CD8-positive, alpha-beta T cell (primary cell): ENCODE measurements at regions of chr5 and their contacts with region 1.

Region 1: GRCh38 chr5:113059232-113060040 is 82.8 kb downstream of the DCP2 start:
- DNase-seq: peak in 1 of 9 experiments; percentile 42
- ATAC-seq: no peak
- H3K4me3 ChIP-seq: no peak overlapping the region
- H3K4me3 Mint-ChIP-seq: peak overlapping the region; percentile 33
- H3K27ac ChIP-seq: no peak overlapping the region
- H3K27ac Mint-ChIP-seq: peak overlapping the region; percentile 78
- H3K4me1 ChIP-seq: peaks cover 48% of the 10 kb centered on the region
- H3K4me1 Mint-ChIP-seq: peaks cover 70% of the 10 kb centered on the region
- H3K27me3 ChIP-seq: no peaks in the 10 kb centered on the region
- H3K27me3 Mint-ChIP-seq: no peaks in the 10 kb centered on the region
- CTCF ChIP-seq: no peak

Region 2: GRCh38 chr5:112186401-112186990 is 872.9 kb before region 1 on chr5:
- CTCF ChIA-PET with region 1: no interaction called
- POLR2A ChIA-PET with region 1: no interaction called
- intact Hi-C with region 1: no loop called
- DNase-seq: peak in 2 of 9 experiments; percentile 35 to 41
- ATAC-seq: no peak
- H3K4me3 ChIP-seq: no peak overlapping the region
- H3K4me3 Mint-ChIP-seq: no peak overlapping the region
- H3K27ac ChIP-seq: no peak overlapping the region
- H3K27ac Mint-ChIP-seq: no peak overlapping the region
- H3K4me1 ChIP-seq: no peaks in the 10 kb centered on the region
- H3K4me1 Mint-ChIP-seq: no peaks in the 10 kb centered on the region
- H3K27me3 ChIP-seq: no peaks in the 10 kb centered on the region
- H3K27me3 Mint-ChIP-seq: peaks cover 33% of the 10 kb centered on the region
- CTCF ChIP-seq: peak; percentile 52

Region 3: DNA sequence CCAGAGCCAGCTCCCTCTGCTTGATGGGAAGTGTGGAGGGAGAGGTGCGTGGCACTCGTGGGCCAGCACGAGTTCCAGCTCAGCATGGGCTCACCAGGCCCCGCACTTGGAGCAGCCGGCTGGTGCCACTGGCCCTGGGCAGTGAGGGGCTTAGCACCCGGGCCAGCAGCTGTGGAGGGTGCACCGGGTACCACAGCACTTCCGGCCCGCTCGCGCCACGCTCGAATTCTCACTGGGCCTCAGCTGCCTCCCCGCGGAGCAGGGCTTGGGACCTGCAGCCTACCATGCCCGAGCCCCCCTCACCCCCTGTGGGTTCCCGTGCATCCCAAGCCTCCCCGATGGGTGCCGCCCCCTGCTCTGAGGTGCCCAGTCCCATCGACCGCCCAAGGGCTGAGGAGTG is 15.6 kb after region 1 on chr5:
- CTCF ChIA-PET with region 1: interaction called, 81 read pairs
- POLR2A ChIA-PET with region 1: interaction called, 29 read pairs
- intact Hi-C with region 1: loop called in 1 of 2 experiments (anchors 1 kb)
- DNase-seq: no peak
- ATAC-seq: no peak
- H3K4me3 ChIP-seq: no peak overlapping the region
- H3K4me3 Mint-ChIP-seq: no peak overlapping the region
- H3K27ac ChIP-seq: no peak overlapping the region
- H3K27ac Mint-ChIP-seq: no peak overlapping the region
- H3K4me1 ChIP-seq: peaks cover 26% of the 10 kb centered on the region
- H3K4me1 Mint-ChIP-seq: peaks cover 45% of the 10 kb centered on the region
- H3K27me3 ChIP-seq: no peaks in the 10 kb centered on the region
- H3K27me3 Mint-ChIP-seq: no peaks in the 10 kb centered on the region
- CTCF ChIP-seq: no peak

Region 4: GRCh38 chr5:113090336-113091106 is 31.1 kb after region 1 on chr5:
- CTCF ChIA-PET with region 1: interaction called, 3 read pairs
- POLR2A ChIA-PET with region 1: interaction called, 3 read pairs
- intact Hi-C with region 1: loop called in 1 of 2 experiments (anchors 5 kb)
- DNase-seq: peak in 4 of 9 experiments; percentile 15 to 39 (median 30)
- ATAC-seq: peak; percentile 75
- H3K4me3 ChIP-seq: no peak overlapping the region
- H3K4me3 Mint-ChIP-seq: no peak overlapping the region
- H3K27ac ChIP-seq: no peak overlapping the region
- H3K27ac Mint-ChIP-seq: peak overlapping the region; percentile 34
- H3K4me1 ChIP-seq: peaks cover 15% of the 10 kb centered on the region
- H3K4me1 Mint-ChIP-seq: peaks cover 25% of the 10 kb centered on the region
- H3K27me3 ChIP-seq: no peaks in the 10 kb centered on the region
- H3K27me3 Mint-ChIP-seq: no peaks in the 10 kb centered on the region
- CTCF ChIP-seq: no peak

Region 5: DNA sequence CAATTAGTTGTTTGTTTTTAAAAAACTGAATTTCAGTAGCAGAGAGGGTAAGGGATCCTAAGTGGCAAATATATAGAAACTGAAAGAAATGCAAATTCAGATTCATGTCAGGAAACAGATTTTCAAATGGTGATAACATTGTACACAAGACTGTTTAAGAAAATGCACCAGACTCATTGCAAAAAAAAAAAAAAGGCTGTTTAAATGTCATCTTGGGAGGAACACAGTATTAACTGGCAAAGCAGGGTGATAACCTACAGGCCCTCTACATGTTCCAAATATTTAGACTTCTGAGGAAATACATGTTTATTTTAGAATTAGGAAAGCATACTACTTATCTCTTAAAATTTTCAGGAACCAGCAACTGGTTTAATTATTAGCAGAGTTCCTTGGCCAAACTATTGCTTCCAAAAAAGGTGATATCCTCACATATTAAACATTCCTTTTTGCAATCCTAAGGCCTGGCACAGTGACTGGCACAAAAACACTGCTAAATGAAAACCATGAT is 260.9 kb after region 1 on chr5:
- CTCF ChIA-PET with region 1: no interaction called
- POLR2A ChIA-PET with region 1: no interaction called
- intact Hi-C with region 1: loop called in 1 of 2 experiments (anchors 5 kb)
- DNase-seq: no peak
- ATAC-seq: no peak
- H3K4me3 ChIP-seq: no peak overlapping the region
- H3K4me3 Mint-ChIP-seq: no peak overlapping the region
- H3K27ac ChIP-seq: no peak overlapping the region
- H3K27ac Mint-ChIP-seq: no peak overlapping the region
- H3K4me1 ChIP-seq: no peaks in the 10 kb centered on the region
- H3K4me1 Mint-ChIP-seq: no peaks in the 10 kb centered on the region
- H3K27me3 ChIP-seq: no peaks in the 10 kb centered on the region
- H3K27me3 Mint-ChIP-seq: no peaks in the 10 kb centered on the region
- CTCF ChIP-seq: no peak